ENCODE measurements at regions of chr18 and their contacts with region 1.

Region 1: GRCh38 chr18:69265656-69266055 is 135.0 kb upstream of the DOK6 start:
- DNase-seq: no peak
- ATAC-seq: no peak
- H3K4me3 ChIP-seq: no peak overlapping the region
- H3K27ac ChIP-seq: no peak overlapping the region
- H3K4me1 ChIP-seq: no peaks in the 10 kb centered on the region
- H3K27me3 ChIP-seq: no peaks in the 10 kb centered on the region

Region 2: DNA sequence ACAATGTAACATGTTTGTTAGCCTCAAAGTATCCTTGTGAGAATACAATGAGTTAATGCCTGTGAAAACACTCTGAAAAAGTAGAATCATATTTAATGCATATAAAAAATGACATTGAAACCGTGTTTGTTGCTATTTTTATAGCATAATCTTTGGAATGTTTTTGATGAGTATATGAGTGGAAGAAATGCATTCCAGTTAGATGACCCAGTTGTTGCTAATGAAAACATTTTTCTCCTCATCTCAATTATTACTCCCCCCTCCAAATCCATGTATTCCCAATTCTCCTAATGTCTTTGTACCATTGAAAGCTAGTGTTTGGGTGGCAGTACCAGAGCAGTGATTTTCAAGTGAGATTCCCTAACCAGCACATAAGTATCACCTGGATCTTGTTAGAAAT is 1682.0 kb before region 1 on chr18:
- intact Hi-C with region 1: no loop called
- DNase-seq: no peak
- ATAC-seq: no peak
- H3K4me3 ChIP-seq: no peak overlapping the region
- H3K27ac ChIP-seq: no peak overlapping the region
- H3K4me1 ChIP-seq: no peaks in the 10 kb centered on the region
- H3K27me3 ChIP-seq: no peaks in the 10 kb centered on the region

Region 3: GRCh38 chr18:69308620-69309019 is 43.0 kb after region 1 on chr18:
- intact Hi-C with region 1: no loop called
- DNase-seq: no peak
- ATAC-seq: no peak
- H3K4me3 ChIP-seq: no peak overlapping the region
- H3K27ac ChIP-seq: no peak overlapping the region
- H3K4me1 ChIP-seq: no peaks in the 10 kb centered on the region
- H3K27me3 ChIP-seq: no peaks in the 10 kb centered on the region

Region 4: GRCh38 chr18:69757733-69758132 is 492.1 kb after region 1 on chr18:
- intact Hi-C with region 1: loop called in 1 of 4 experiments (anchors 10 kb)
- DNase-seq: no peak
- ATAC-seq: no peak
- H3K4me3 ChIP-seq: no peak overlapping the region
- H3K27ac ChIP-seq: no peak overlapping the region
- H3K4me1 ChIP-seq: no peaks in the 10 kb centered on the region
- H3K27me3 ChIP-seq: no peaks in the 10 kb centered on the region

Measured in right cardiac atrium (tissue), 5 donors.